Heart left ventricle (tissue), 16 donors: ENCODE measurements at regions of chr7 and their contacts with region 1.

Region 1: GRCh38 chr7:123154231-123154860 is 45.4 kb downstream of the SLC13A1 start:
- DNase-seq: peak in 4 of 5 donors; percentile 41 to 67 (median 50)
- ATAC-seq: peak in 3 of 4 donors; percentile 66 to 84 (median 68)
- H3K4me3 ChIP-seq: no peak overlapping the region
- H3K27ac ChIP-seq: no peak overlapping the region
- H3K4me1 ChIP-seq: no peaks in the 10 kb centered on the region
- H3K27me3 ChIP-seq: no peaks in the 10 kb centered on the region
- CTCF ChIP-seq: peak; percentile 66 to 89 (median 78)
- POLR2A ChIP-seq: no peak

Region 2: GRCh38 chr7:122225874-122226273 is 928.5 kb before region 1 on chr7:
- intact Hi-C with region 1: loop called in 5 of 10 experiments (anchors 5 to 10 kb)
- DNase-seq: no peak
- ATAC-seq: no peak
- H3K4me3 ChIP-seq: no peak overlapping the region
- H3K27ac ChIP-seq: no peak overlapping the region
- H3K4me1 ChIP-seq: no peaks in the 10 kb centered on the region
- H3K27me3 ChIP-seq: peaks cover 0 to 7% (median 0%) of the 10 kb centered on the region in 9 donors
- CTCF ChIP-seq: no peak
- POLR2A ChIP-seq: no peak

Region 3: DNA sequence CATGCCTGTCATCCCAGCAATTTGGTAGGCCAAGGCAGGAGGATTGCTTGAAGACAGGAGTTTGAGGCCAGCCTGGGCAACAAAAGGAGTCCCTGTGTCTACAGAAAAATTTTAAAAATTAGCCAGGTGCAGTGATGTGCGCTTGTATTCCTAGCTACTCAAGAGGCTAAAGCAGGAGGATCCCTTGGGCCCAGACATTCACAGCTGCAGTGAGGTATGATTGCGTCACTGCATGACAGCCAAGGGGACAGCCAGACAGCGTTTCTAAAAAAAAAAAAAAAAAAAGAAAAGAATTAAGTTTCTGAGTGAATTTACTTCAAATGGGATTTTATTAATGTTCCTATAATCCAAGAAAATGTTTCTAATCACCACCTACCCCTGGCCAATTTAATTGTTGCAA is 364.2 kb before region 1 on chr7:
- intact Hi-C with region 1: loop called in 1 of 10 experiments (anchors 10 kb)
- DNase-seq: peak in 1 of 5 donors; percentile 24
- ATAC-seq: no peak
- H3K4me3 ChIP-seq: no peak overlapping the region
- H3K27ac ChIP-seq: no peak overlapping the region
- H3K4me1 ChIP-seq: no peaks in the 10 kb centered on the region
- H3K27me3 ChIP-seq: no peaks in the 10 kb centered on the region
- CTCF ChIP-seq: no peak
- POLR2A ChIP-seq: no peak

Region 4: DNA sequence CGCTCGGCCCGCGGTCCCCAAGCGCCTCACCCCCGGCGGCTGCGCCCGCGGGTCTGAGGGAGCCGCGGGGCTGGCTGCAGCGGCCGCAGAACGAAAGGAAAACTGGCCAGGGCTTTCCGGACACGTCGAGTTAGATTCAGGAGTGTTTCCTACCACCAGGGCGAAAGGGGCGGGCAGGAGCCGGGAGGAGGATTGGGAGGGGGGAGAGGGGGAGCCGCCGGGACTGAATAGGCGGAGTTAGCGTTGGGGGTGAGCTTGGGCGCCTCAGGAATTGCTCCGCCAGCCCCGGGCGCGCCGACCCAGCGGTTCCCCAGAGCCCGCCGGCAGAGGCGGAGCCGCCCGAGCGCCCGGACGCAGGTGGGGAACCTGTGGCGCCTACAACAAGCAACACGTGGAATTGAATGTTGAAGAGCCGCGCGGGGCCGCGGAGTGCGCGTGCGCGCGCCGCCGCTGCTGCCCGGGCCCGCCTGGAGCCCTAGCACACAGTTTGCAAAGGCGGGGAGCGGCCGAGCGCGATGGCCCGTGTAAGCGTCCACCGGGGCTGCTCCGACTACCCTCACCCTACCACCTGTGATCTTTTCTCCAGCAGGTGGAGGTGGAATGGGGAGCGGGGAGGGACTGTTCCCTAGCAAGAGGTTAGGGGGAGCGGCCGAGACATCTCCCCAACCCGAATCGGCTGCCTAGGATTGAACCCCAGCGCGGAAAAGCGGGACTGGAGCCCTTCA is 267.8 kb before region 1 on chr7 and contains the start of gene CADPS2:
- intact Hi-C with region 1: loop called in 6 of 10 experiments (anchors 5 to 10 kb)
- DNase-seq: peak; percentile 87 to 90 (median 88)
- ATAC-seq: peak; percentile 82 to 96 (median 94)
- H3K4me3 ChIP-seq: peak within 1 kb of the TSS; percentile 63 to 91 (median 84)
- H3K27ac ChIP-seq: peak within 1 kb of the TSS; percentile 85 to 95 (median 91)
- H3K4me1 ChIP-seq: peaks cover 0 to 27% (median 6%) of the 10 kb centered on the region in 12 donors
- H3K27me3 ChIP-seq: peaks cover 0 to 33% (median 0%) of the 10 kb centered on the region in 9 donors
- CTCF ChIP-seq: peak in 7 of 12 donors; percentile 6 to 38 (median 33)
- POLR2A ChIP-seq: peak in 1 of 2 donors; percentile 83
- total RNA-seq, gene CADPS2: 6.5 to 29.0 (median 10.3) TPM

Region 5: GRCh38 chr7:122942059-122942458 is 212.3 kb before region 1 on chr7:
- intact Hi-C with region 1: no loop called
- DNase-seq: no peak
- ATAC-seq: no peak
- H3K4me3 ChIP-seq: no peak overlapping the region
- H3K27ac ChIP-seq: no peak overlapping the region
- H3K4me1 ChIP-seq: no peaks in the 10 kb centered on the region
- H3K27me3 ChIP-seq: no peaks in the 10 kb centered on the region
- CTCF ChIP-seq: no peak
- POLR2A ChIP-seq: no peak